ENCODE measurements at regions of chr11 and their contacts with region 1.

Region 1: GRCh38 chr11:74427385-74427886 is 29.2 kb upstream of the PGM2L1 start:
- DNase-seq: no peak
- H3K4me3 ChIP-seq: no peak overlapping the region
- H3K27ac ChIP-seq: no peak overlapping the region
- H3K4me1 ChIP-seq: peaks cover 0 to 6% (median 0%) of the 10 kb centered on the region in 4 donors
- H3K27me3 ChIP-seq: no peaks in the 10 kb centered on the region
- CTCF ChIP-seq: no peak
- EP300 ChIP-seq: no peak
- POLR2A ChIP-seq: no peak

Region 2: GRCh38 chr11:74278721-74279161 is 148.7 kb before region 1 on chr11:
- in situ Hi-C with region 1: loop called in 1 of 4 experiments (anchors 10 kb)
- intact Hi-C with region 1: no loop called
- DNase-seq: peak; percentile 42
- H3K4me3 ChIP-seq: no peak overlapping the region
- H3K27ac ChIP-seq: peak overlapping the region in 3 of 4 donors; percentile 50 to 64 (median 56)
- H3K4me1 ChIP-seq: peaks cover 0 to 8% (median 2%) of the 10 kb centered on the region in 4 donors
- H3K27me3 ChIP-seq: no peaks in the 10 kb centered on the region
- CTCF ChIP-seq: no peak
- EP300 ChIP-seq: no peak
- POLR2A ChIP-seq: no peak